ENCODE measurements at regions of chr9 and their contacts with region 1.

Region 1: GRCh38 chr9:98993570-98993945 is 49.9 kb downstream of the COL15A1 start:
- DNase-seq: peak; percentile 80
- H3K4me3 Mint-ChIP-seq: no peak overlapping the region
- H3K27ac Mint-ChIP-seq: no peak overlapping the region
- H3K4me1 Mint-ChIP-seq: peaks cover 9% of the 10 kb centered on the region
- H3K27me3 Mint-ChIP-seq: peaks cover 4% of the 10 kb centered on the region

Region 2: DNA sequence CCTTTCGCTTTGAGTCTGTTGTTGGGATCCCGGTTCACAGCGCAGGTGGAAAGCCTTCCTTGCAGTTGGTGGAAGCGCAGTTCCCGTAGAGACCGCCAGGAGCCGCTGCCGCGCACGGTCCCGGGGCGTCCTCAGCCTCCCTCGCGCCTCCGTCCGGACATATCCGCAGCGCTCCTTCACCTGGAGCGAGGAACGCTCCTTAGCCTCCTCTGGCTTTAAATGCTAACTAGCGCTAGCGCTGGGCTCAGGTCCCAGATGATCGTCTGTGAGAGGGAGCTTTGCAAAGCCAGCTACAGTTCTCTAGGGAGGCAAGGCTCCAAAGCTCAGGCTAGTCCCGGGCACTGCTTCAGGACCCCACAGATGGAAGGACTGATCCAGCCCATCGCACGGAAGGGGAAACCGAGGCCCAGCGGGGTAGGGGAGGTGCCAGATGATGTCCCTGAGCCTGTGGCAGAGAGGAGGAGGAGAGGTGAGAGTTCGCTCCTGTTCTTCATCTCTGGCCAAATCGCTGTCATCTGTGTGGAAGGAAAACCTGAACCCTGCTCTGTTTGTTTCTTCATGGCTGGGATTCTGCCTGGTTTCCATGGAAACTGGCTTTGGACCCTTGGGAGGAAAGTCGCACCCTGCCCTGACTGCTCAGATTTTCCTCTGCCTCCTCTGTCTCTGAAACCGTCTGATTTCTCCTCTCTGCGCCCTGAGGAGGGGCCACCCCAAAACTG is 18.4 kb before region 1 on chr9:
- CTCF ChIA-PET with region 1: interaction called, 24 read pairs
- intact Hi-C with region 1: no loop called
- DNase-seq: peak; percentile 88
- H3K4me3 Mint-ChIP-seq: peak overlapping the region; percentile 7
- H3K27ac Mint-ChIP-seq: no peak overlapping the region
- H3K4me1 Mint-ChIP-seq: no peaks in the 10 kb centered on the region
- H3K27me3 Mint-ChIP-seq: peaks cover 5% of the 10 kb centered on the region

Region 3: DNA sequence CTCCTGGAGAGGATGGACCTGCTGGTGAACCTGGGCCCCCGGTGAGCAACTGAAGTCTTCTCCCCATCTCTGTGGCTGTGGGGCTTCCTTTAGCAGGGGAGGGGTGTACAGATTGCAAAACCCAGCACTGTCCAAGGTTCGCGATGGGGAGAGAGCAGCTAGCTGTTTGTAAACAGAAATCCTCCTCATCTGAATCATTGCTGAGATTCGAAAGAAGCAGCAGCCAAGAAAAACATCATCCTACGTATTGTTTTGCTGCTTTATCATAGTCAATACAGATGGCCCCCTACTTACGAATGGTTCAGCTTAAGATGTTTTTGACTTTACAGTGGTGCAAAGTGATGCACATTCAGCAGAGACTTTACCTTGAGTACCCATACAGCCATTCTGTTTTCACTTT is 31.4 kb after region 1 on chr9:
- CTCF ChIA-PET with region 1: no interaction called
- intact Hi-C with region 1: no loop called
- DNase-seq: no peak
- H3K4me3 Mint-ChIP-seq: no peak overlapping the region
- H3K27ac Mint-ChIP-seq: no peak overlapping the region
- H3K4me1 Mint-ChIP-seq: peaks cover 20% of the 10 kb centered on the region
- H3K27me3 Mint-ChIP-seq: no peaks in the 10 kb centered on the region